GM12878 (cell line): ENCODE measurements at regions of chr20 and their contacts with region 1.

Region 1: GRCh38 chr20:19692685-19693119 is 65.4 kb upstream of the RIN2 start:
- DNase-seq: no peak
- ATAC-seq: peak; percentile 81
- H3K4me3 ChIP-seq: no peak overlapping the region
- H3K27ac ChIP-seq: no peak overlapping the region
- H3K4me1 ChIP-seq: no peaks in the 10 kb centered on the region
- H3K27me3 ChIP-seq: peaks cover 0 to 2% of the 10 kb centered on the region in 2 experiments; a peak in 2 of 4 replicates
- CTCF ChIP-seq: peak; percentile 82 to 88 (median 85)
- EP300 ChIP-seq: no peak
- POLR2A ChIP-seq: no peak
- RAD21 ChIP-seq: peak; percentile 62

Region 2: DNA sequence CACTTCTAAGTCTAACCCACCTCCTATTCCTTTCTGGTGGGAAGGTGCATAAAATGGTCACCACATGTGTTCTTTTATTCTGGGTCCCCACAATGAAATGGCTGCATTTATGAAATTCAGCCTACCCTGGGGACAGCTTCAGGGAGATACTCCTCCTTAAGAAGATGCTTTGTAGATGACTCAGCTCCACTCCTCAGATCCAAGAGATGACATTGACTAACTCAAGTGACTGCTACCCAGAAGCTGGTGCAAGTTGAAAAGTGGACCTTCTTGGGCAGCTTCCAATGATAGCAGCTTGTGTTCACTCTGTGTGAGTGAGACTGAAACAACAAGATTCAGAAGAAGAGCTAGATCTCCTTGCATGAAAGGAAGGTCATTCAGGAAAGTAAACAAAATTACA is 765.7 kb before region 1 on chr20:
- CTCF ChIA-PET with region 1: no interaction called
- POLR2A ChIA-PET with region 1: no interaction called
- RAD21 ChIA-PET with region 1: no interaction called
- SMC1A ChIA-PET with region 1: no interaction called
- in situ Hi-C with region 1: no loop called
- intact Hi-C with region 1: no loop called
- DNase-seq: no peak
- ATAC-seq: no peak
- H3K4me3 ChIP-seq: no peak overlapping the region
- H3K27ac ChIP-seq: no peak overlapping the region
- H3K4me1 ChIP-seq: no peaks in the 10 kb centered on the region
- H3K27me3 ChIP-seq: no peaks in the 10 kb centered on the region
- CTCF ChIP-seq: no peak
- EP300 ChIP-seq: no peak
- POLR2A ChIP-seq: no peak
- RAD21 ChIP-seq: no peak

Region 3: DNA sequence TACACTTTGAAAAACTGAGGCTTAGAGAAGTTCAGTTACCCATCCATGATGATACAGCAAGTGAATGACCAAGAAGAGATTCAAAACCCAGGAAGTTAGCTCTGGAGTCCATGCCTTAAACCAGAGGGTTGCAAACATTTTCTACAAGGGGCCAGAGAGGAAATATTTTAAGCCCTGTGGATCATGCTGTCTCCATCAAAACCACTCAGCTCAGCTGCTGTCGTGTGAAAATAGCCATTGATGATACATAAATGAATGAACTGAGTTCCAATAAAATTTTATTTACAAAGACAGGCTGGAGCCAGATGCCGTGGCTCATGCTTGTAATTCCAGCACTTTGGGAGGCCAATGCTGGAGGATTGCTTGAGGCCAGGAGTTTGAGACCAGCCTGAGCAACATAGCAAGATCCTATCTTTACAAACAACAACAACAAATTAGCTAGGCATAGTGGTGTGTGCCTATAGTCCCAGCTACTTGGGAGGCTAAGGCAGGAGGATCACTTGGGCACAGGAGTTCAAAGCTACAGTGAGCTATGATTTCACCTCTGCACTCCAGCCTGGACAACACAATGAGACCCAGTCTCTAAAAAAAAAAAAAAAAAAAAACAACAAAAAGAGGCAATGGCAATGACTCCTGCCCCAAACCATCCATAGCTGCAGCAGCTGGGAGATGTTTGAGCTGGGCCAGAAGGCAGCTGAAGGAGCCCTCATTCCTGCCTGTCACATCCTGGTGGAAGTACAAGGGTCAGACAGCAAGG is 21.3 kb after region 1 on chr20:
- CTCF ChIA-PET with region 1: interaction called, 12 read pairs
- POLR2A ChIA-PET with region 1: no interaction called
- RAD21 ChIA-PET with region 1: no interaction called
- SMC1A ChIA-PET with region 1: interaction called, 5 read pairs
- in situ Hi-C with region 1: no loop called
- intact Hi-C with region 1: no loop called
- DNase-seq: no peak
- ATAC-seq: no peak
- H3K4me3 ChIP-seq: no peak overlapping the region
- H3K27ac ChIP-seq: no peak overlapping the region
- H3K4me1 ChIP-seq: no peaks in the 10 kb centered on the region
- H3K27me3 ChIP-seq: peaks cover 0 to 2% of the 10 kb centered on the region in 2 experiments; a peak in 1 of 4 replicates
- CTCF ChIP-seq: no peak
- EP300 ChIP-seq: no peak
- POLR2A ChIP-seq: no peak
- RAD21 ChIP-seq: no peak

Region 4: DNA sequence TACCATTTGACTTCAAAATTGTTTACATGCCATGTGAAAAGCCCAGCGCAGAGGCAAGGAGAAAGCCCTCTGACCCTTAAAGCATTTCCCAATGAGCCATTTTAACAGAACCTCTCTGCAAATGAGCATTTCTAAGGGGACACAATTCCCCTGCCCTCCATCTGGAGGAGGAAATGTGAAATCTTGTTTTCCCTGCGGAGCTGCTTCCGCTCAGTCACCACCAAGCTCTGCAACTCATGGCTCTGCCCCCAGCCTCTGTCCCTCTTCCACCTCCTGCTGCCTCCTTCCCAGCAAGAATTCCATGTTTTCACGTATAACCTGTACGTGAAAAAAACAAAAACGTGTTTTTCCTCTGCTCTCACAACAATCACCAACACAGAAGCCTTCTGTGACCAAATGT is 77.7 kb after region 1 on chr20:
- CTCF ChIA-PET with region 1: interaction called, 12 read pairs
- POLR2A ChIA-PET with region 1: no interaction called
- RAD21 ChIA-PET with region 1: interaction called, 4 read pairs
- SMC1A ChIA-PET with region 1: interaction called, 11 read pairs
- in situ Hi-C with region 1: no loop called
- intact Hi-C with region 1: no loop called
- DNase-seq: no peak
- ATAC-seq: no peak
- H3K4me3 ChIP-seq: no peak overlapping the region
- H3K27ac ChIP-seq: no peak overlapping the region
- H3K4me1 ChIP-seq: no peaks in the 10 kb centered on the region
- H3K27me3 ChIP-seq: peaks cover 3 to 7% of the 10 kb centered on the region in 2 experiments
- CTCF ChIP-seq: no peak
- EP300 ChIP-seq: no peak
- POLR2A ChIP-seq: no peak
- RAD21 ChIP-seq: no peak

Region 5: DNA sequence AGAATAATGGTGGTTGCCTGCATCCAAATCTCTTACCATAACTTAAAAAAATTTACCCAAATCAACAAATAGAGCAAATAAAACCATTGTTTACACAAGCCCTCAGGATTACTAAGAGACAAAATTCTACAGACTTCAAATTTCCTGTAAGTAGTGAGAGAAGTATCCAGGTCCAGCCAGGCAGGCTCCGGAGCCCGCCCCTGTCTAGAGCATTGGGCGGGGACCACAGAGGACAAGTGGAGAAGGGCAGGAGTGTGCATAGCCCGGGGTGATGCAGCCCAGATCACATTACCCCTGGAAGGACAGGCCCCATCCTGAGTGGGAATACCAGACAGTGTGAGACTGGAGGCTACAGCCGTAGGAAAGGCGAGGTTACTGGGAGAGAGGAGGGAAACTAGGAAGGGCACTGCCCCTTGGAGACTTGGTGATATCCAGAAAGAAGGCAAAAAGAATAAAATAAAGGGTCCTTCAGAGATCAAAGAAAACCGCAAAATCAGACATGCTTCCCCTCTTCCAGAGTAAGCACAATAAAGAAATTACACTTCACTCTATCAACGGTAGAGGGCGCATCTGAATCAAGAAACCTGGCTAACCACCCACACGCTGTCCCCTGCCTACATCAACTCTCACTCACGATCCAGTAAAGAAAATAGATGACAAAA is 91.9 kb after region 1 on chr20:
- CTCF ChIA-PET with region 1: interaction called, 33 read pairs
- POLR2A ChIA-PET with region 1: no interaction called
- RAD21 ChIA-PET with region 1: interaction called, 20 read pairs
- SMC1A ChIA-PET with region 1: interaction called, 16 read pairs
- in situ Hi-C with region 1: no loop called
- intact Hi-C with region 1: loop called (anchors 1 kb)
- DNase-seq: peak; percentile 9
- ATAC-seq: peak; percentile 88
- H3K4me3 ChIP-seq: no peak overlapping the region
- H3K27ac ChIP-seq: no peak overlapping the region
- H3K4me1 ChIP-seq: peaks cover 12% of the 10 kb centered on the region; the same call in 1 of the 2 replicates
- H3K27me3 ChIP-seq: no peaks in the 10 kb centered on the region
- CTCF ChIP-seq: peak; percentile 61 to 71 (median 64)
- EP300 ChIP-seq: no peak
- POLR2A ChIP-seq: no peak
- RAD21 ChIP-seq: peak; percentile 85

Region 6: DNA sequence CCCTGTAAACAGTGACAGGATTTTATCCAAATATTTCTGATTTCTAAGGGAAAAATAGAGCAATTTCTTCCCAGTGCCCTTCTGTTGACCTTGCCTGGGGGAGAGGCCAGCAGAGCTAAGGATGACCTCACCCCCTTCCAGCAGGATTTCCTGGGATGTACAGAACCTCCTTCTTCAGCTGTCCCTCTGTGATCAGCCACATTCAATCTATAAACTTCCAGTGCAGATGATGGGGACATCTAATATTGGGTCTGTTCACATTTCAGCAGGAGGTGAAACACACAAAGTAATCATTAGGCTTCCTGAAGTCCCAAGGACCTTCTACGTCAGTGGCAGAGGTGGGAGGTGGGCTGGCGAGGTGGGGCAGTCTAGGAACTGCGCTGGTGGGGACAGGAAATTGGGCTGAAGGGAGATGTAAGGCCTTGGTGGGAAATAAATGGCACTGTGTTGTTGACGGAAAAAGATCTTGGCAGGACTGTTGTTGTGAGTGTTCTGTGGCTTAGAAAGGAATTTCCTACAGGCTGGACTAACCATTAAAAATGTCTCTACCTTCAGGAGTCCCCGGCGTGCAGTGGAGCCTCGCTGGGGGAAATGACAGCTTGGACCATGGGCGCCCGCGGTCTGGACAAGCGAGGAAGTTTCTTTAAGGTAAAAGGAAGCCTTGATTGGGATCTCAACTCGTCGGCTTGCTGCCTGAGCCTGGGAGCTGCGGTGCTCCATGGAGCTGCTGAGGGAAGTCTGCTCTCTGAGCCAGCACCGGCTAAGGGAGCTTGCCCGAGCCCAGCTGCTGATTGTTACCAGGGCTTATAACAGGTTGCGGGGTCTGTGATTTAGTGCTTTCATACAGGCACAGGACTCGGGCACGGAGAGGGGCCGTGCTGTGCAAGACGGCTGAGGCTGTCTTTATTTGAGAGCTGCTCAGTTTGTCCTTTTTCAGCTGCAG is 196.6 kb after region 1 on chr20:
- CTCF ChIA-PET with region 1: no interaction called
- POLR2A ChIA-PET with region 1: no interaction called
- RAD21 ChIA-PET with region 1: no interaction called
- SMC1A ChIA-PET with region 1: interaction called, 3 read pairs
- in situ Hi-C with region 1: no loop called
- intact Hi-C with region 1: loop called (anchors 10 kb)
- DNase-seq: no peak
- ATAC-seq: no peak
- H3K4me3 ChIP-seq: no peak overlapping the region
- H3K27ac ChIP-seq: no peak overlapping the region
- H3K4me1 ChIP-seq: no peaks in the 10 kb centered on the region
- H3K27me3 ChIP-seq: peaks cover 0 to 11% of the 10 kb centered on the region in 2 experiments; a peak in 3 of 4 replicates
- CTCF ChIP-seq: no peak
- EP300 ChIP-seq: no peak
- POLR2A ChIP-seq: no peak
- RAD21 ChIP-seq: no peak